ENCODE measurements at regions of chr2 and their contacts with region 1.

Region 1: GRCh38 chr2:27663463-27664249 is at the starts of genes SLC4A1AP and SUPT7L:
- DNase-seq: peak; percentile 74 to 88 (median 82)
- ATAC-seq: peak; percentile 89
- H3K4me3 ChIP-seq: peak within 1 kb of the TSS; percentile 98
- H3K4me3 Mint-ChIP-seq: peak within 1 kb of the TSS; percentile 94 to 100 (median 100)
- H3K27ac ChIP-seq: peak within 1 kb of the TSS; percentile 95
- H3K27ac Mint-ChIP-seq: peak within 1 kb of the TSS; percentile 98 to 100 (median 99)
- H3K4me1 ChIP-seq: peaks cover 18 to 20% of the 10 kb centered on the region in 2 donors
- H3K4me1 Mint-ChIP-seq: peaks cover 35 to 75% (median 64%) of the 10 kb centered on the region in 7 donors
- H3K27me3 ChIP-seq: no peaks in the 10 kb centered on the region
- H3K27me3 Mint-ChIP-seq: no peaks in the 10 kb centered on the region
- total RNA-seq, gene SLC4A1AP: 14.7 to 27.0 (median 23.2) TPM
- total RNA-seq, gene SUPT7L: 37.9 to 58.6 (median 46.5) TPM

Region 2: GRCh38 chr2:27123302-27124231 is 540.1 kb before region 1 on chr2 and contains the start of gene ABHD1:
- CTCF ChIA-PET with region 1: no interaction called
- POLR2A ChIA-PET with region 1: no interaction called
- intact Hi-C with region 1: loop called in 1 of 2 experiments (anchors 1 kb)
- DNase-seq: peak; percentile 37 to 79 (median 51)
- ATAC-seq: peak; percentile 84
- H3K4me3 ChIP-seq: peak within 1 kb of the TSS; percentile 59
- H3K4me3 Mint-ChIP-seq: peak within 1 kb of the TSS; percentile 83 to 95 (median 92)
- H3K27ac ChIP-seq: peak within 1 kb of the TSS; percentile 61
- H3K27ac Mint-ChIP-seq: peak within 1 kb of the TSS; percentile 78 to 89 (median 86)
- H3K4me1 ChIP-seq: peaks cover 5 to 11% of the 10 kb centered on the region in 2 donors
- H3K4me1 Mint-ChIP-seq: peaks cover 10 to 30% (median 20%) of the 10 kb centered on the region in 7 donors
- H3K27me3 ChIP-seq: peaks cover 0 to 3% of the 10 kb centered on the region in 2 donors
- H3K27me3 Mint-ChIP-seq: peaks cover 11 to 40% (median 14%) of the 10 kb centered on the region in 5 donors
- total RNA-seq, gene ABHD1: 0.53 to 2.0 (median 1.5) TPM

Region 3: GRCh38 chr2:27356382-27357181 is 307.1 kb before region 1 on chr2 and contains the start of gene GTF3C2:
- CTCF ChIA-PET with region 1: no interaction called
- POLR2A ChIA-PET with region 1: no interaction called
- intact Hi-C with region 1: loop called in 1 of 2 experiments (anchors 1 kb)
- DNase-seq: peak; percentile 76 to 94 (median 92)
- ATAC-seq: peak; percentile 85
- H3K4me3 ChIP-seq: peak within 1 kb of the TSS; percentile 96
- H3K4me3 Mint-ChIP-seq: peak within 1 kb of the TSS; percentile 95 to 100 (median 98)
- H3K27ac ChIP-seq: peak within 1 kb of the TSS; percentile 91
- H3K27ac Mint-ChIP-seq: peak within 1 kb of the TSS; percentile 96 to 100 (median 99)
- H3K4me1 ChIP-seq: peaks cover 24 to 34% of the 10 kb centered on the region in 2 donors
- H3K4me1 Mint-ChIP-seq: peaks cover 38 to 63% (median 56%) of the 10 kb centered on the region in 7 donors
- H3K27me3 ChIP-seq: no peaks in the 10 kb centered on the region
- H3K27me3 Mint-ChIP-seq: no peaks in the 10 kb centered on the region
- total RNA-seq, gene GTF3C2: 68.0 to 106 (median 78.3) TPM

Region 4: DNA sequence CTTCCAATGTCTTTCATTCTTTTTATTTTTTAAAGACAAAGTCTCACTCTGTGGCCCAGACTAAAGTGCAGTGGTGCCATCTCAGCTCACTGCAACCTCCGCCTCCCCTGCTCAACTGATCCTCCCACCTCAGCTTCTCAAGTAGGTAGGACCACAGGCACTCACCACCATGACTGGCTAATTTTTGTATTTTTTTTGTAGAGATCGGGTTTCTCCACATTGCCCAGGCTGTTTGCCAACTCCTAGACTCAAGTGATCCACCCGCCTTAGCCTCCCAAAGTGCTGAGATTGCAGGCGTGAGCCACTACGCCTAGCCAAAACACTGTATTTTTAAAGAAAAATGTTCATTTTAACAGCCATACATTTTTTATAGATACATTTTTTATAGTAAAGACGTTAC is 154.3 kb before region 1 on chr2:
- CTCF ChIA-PET with region 1: no interaction called
- POLR2A ChIA-PET with region 1: no interaction called
- intact Hi-C with region 1: no loop called
- DNase-seq: no peak
- ATAC-seq: no peak
- H3K4me3 ChIP-seq: no peak overlapping the region
- H3K4me3 Mint-ChIP-seq: no peak overlapping the region
- H3K27ac ChIP-seq: no peak overlapping the region
- H3K27ac Mint-ChIP-seq: no peak overlapping the region
- H3K4me1 ChIP-seq: no peaks in the 10 kb centered on the region
- H3K4me1 Mint-ChIP-seq: no peaks in the 10 kb centered on the region
- H3K27me3 ChIP-seq: no peaks in the 10 kb centered on the region
- H3K27me3 Mint-ChIP-seq: peaks cover 5 to 27% (median 18%) of the 10 kb centered on the region in 5 donors

Region 5: DNA sequence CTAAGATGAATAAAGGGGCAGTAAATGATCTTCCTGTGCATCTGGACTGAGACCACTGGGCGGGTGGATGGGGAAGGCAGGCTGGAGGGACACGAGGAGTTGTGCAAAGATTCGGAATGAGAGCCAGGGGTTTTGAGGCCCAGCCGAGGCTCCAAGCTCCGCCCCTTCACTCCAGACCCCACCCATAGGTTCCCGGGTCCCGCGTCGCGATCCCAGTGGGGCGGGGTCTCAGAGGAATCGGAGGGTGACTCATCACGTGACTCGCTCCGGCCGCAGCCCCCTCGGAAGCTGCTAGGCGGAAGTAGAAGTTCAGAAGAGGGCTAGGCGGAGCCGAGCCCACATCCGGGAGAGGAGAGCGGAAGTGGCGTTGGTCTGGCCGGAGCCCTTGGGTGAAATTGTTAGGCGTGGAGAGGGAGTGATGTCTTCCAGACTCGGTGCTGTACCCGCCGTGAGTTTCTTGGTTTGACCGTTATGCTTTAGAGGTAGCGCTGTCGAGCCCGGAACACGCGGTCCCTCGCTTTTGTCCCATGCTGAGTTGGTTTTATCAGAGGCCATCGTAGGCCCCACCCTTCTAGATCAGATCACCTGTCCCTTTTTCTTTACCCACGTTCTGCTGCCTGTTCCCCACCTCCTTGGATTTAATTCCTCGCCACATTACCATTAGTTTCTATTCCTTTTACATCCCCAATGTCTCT is 80.8 kb before region 1 on chr2 and contains the start of gene ZNF512:
- CTCF ChIA-PET with region 1: interaction called, 3 read pairs
- POLR2A ChIA-PET with region 1: interaction called, 5 read pairs
- intact Hi-C with region 1: loop called (anchors 1 kb)
- DNase-seq: peak; percentile 44 to 76 (median 70)
- ATAC-seq: peak; percentile 92
- H3K4me3 ChIP-seq: peak within 1 kb of the TSS; percentile 75
- H3K4me3 Mint-ChIP-seq: peak within 1 kb of the TSS; percentile 90 to 100 (median 95)
- H3K27ac ChIP-seq: peak within 1 kb of the TSS; percentile 84
- H3K27ac Mint-ChIP-seq: peak within 1 kb of the TSS; percentile 85 to 98 (median 94)
- H3K4me1 ChIP-seq: peaks cover 22 to 35% of the 10 kb centered on the region in 2 donors
- H3K4me1 Mint-ChIP-seq: peaks cover 37 to 60% (median 53%) of the 10 kb centered on the region in 7 donors
- H3K27me3 ChIP-seq: no peaks in the 10 kb centered on the region
- H3K27me3 Mint-ChIP-seq: peaks cover 0 to 16% (median 0%) of the 10 kb centered on the region in 5 donors
- total RNA-seq, gene ZNF512: 26.6 to 64.6 (median 50.1) TPM

Region 6: DNA sequence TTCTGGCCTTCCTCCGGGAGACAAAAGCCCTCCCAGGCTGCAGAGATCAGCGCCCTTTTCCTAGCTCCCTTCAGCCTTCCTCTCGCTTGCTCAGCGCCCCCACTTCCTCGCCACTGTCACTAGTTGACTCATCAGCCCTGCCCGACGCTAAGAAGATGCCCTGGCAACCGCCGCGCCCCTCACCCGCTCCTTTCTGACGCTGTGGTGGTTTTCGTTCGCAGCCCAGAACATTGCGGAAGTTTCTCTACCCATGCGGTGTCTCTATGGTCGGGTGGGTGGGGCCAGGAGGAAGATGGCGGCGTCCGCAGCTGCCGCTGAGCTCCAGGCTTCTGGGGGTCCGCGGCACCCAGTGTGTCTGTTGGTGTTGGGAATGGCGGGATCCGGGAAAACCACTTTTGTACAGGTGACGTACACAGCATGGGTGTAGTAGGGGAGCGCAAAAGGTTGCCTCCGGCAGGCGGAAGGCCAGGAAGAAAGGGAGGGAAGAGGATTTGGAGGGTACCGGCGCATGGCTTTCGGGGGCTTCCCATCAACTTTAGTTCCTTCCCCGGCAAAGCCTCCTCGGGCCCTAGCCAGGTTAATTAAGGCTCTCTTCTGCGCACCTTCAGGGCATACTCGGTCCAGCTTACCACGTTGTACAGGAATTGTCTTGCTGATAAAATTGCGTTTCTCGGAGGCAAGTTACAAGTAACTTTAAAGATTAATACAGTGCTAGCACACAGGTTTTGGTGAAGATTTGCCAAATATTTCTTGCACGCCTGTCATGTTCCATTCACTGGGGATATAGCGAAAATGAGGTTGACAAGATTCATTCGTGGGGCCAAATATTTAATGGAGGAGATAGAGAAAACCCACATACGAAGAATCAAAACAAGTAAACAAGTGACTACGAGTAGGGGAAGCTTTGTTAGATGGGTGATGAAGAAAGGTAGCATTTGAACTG is 34.6 kb before region 1 on chr2 and contains the starts of genes CCDC121 and GPN1:
- CTCF ChIA-PET with region 1: no interaction called
- POLR2A ChIA-PET with region 1: interaction called, 9 read pairs
- intact Hi-C with region 1: loop called (anchors 1 kb)
- DNase-seq: peak; percentile 79 to 96 (median 93)
- ATAC-seq: peak; percentile 99
- H3K4me3 ChIP-seq: peak within 1 kb of the TSS; percentile 92
- H3K4me3 Mint-ChIP-seq: no peak within 1 kb of the TSS
- H3K27ac ChIP-seq: peak within 1 kb of the TSS; percentile 92
- H3K27ac Mint-ChIP-seq: peak within 1 kb of the TSS in 5 of 9 donors; percentile 16 to 72 (median 59)
- H3K4me1 ChIP-seq: peaks cover 11 to 13% of the 10 kb centered on the region in 2 donors
- H3K4me1 Mint-ChIP-seq: peaks cover 1 to 33% (median 22%) of the 10 kb centered on the region in 7 donors
- H3K27me3 ChIP-seq: no peaks in the 10 kb centered on the region
- H3K27me3 Mint-ChIP-seq: no peaks in the 10 kb centered on the region
- total RNA-seq, gene CCDC121: 0.61 to 2.7 (median 1.9) TPM
- total RNA-seq, gene GPN1: 27.8 to 45.5 (median 28.9) TPM

Region 7: DNA sequence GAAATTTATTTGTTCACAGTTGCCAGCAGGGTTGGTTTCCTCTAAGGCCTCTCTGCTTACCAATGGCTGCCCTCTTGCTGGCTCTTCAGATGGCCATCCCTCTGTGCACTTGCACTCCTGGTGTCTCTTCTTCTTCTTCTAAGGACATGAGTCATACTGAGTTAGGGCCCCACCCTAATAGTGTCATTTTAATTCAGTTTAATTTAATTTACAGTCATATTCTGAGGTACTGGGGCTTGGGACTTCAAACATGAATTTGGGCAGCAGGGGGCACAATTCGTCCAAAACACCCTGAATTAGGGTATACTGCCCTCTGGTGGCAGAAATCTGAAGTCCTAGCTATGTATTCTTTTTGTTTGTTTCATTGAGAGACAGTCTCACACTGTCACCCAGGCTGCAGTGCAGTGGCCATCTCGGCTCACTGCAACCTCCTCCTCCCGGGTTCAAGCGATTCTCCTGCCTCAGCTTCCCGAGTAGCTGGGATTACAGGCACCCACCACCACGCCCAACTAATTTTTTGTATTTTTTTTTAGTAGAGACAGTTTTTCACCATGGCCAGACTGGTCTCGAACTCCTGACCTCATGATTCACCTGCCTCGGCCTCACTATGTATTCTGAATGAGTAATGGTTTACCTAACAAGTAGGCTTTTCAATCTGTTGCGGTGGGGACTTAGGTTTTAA is 19.9 kb after region 1 on chr2:
- CTCF ChIA-PET with region 1: interaction called, 7 read pairs
- POLR2A ChIA-PET with region 1: interaction called, 5 read pairs
- intact Hi-C with region 1: loop called (anchors 1 to 2 kb)
- DNase-seq: peak; percentile 54 to 90 (median 82)
- ATAC-seq: peak; percentile 98
- H3K4me3 ChIP-seq: no peak overlapping the region
- H3K4me3 Mint-ChIP-seq: peak overlapping the region in 1 of 10 donors; percentile 35
- H3K27ac ChIP-seq: no peak overlapping the region
- H3K27ac Mint-ChIP-seq: peak overlapping the region; percentile 35 to 78 (median 66)
- H3K4me1 ChIP-seq: peaks cover 0 to 28% of the 10 kb centered on the region in 2 donors
- H3K4me1 Mint-ChIP-seq: peaks cover 5 to 25% (median 13%) of the 10 kb centered on the region in 7 donors
- H3K27me3 ChIP-seq: no peaks in the 10 kb centered on the region
- H3K27me3 Mint-ChIP-seq: no peaks in the 10 kb centered on the region

Region 8: GRCh38 chr2:27771548-27772335 is 108.1 kb after region 1 on chr2 and contains the start of gene MRPL33:
- CTCF ChIA-PET with region 1: no interaction called
- POLR2A ChIA-PET with region 1: interaction called, 3 read pairs
- intact Hi-C with region 1: loop called in 1 of 2 experiments (anchors 1 kb)
- DNase-seq: peak; percentile 85 to 92 (median 89)
- ATAC-seq: peak; percentile 97
- H3K4me3 ChIP-seq: peak within 1 kb of the TSS; percentile 92
- H3K4me3 Mint-ChIP-seq: peak within 1 kb of the TSS; percentile 96 to 100 (median 99)
- H3K27ac ChIP-seq: peak within 1 kb of the TSS; percentile 92
- H3K27ac Mint-ChIP-seq: peak within 1 kb of the TSS; percentile 97 to 100 (median 100)
- H3K4me1 ChIP-seq: peaks cover 10 to 20% of the 10 kb centered on the region in 2 donors
- H3K4me1 Mint-ChIP-seq: peaks cover 32 to 59% (median 52%) of the 10 kb centered on the region in 7 donors
- H3K27me3 ChIP-seq: no peaks in the 10 kb centered on the region
- H3K27me3 Mint-ChIP-seq: peaks cover 0 to 8% (median 0%) of the 10 kb centered on the region in 5 donors
- total RNA-seq, gene MRPL33: 27.3 to 39.4 (median 35.1) TPM